HEK293 (cell line): ENCODE measurements at regions of chrX and their contacts with region 1.

Region 1: DNA sequence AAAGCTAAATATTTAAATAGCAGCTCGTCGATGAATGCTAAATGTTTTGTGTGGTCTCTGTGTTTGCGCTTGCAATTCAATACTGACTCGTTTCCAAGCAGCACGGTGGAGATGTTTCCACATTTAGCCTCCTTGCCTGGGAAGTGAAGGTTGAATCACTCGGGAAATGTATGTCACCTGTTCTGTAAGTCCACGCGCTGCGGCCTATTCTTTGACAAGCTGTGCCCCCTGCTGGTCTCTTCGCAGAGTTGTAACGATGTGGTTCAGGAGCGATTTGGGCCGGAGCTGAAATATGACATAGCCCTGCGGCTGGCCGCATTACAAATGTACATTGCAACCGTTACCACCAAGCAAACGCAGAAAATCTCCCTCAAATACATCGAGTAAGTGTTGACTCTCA is 89.6 kb upstream of the PRPS2 start:
- H3K4me3 ChIP-seq: no peak overlapping the region
- H3K27ac ChIP-seq: no peak overlapping the region
- H3K4me1 ChIP-seq: no peaks in the 10 kb centered on the region
- CTCF ChIP-seq: 0 out of 2 replicates have a peak, but pooled peaks have one; percentile 7

Region 2: GRCh38 chrX:12080265-12080664 is 621.4 kb before region 1 on chrX:
- CTCF ChIA-PET with region 1: interaction called, 17 read pairs
- POLR2A ChIA-PET with region 1: no interaction called
- H3K4me3 ChIP-seq: no peak overlapping the region
- H3K27ac ChIP-seq: peak overlapping the region; percentile 54; the same call in 1 of the 2 replicates
- H3K4me1 ChIP-seq: peaks cover 3% of the 10 kb centered on the region; the same call in 1 of the 2 replicates
- CTCF ChIP-seq: no peak

Region 3: GRCh38 chrX:12497832-12498591 is 203.6 kb before region 1 on chrX:
- CTCF ChIA-PET with region 1: interaction called, 10 read pairs
- POLR2A ChIA-PET with region 1: no interaction called
- H3K4me3 ChIP-seq: no peak overlapping the region
- H3K27ac ChIP-seq: no peak overlapping the region
- H3K4me1 ChIP-seq: no peaks in the 10 kb centered on the region
- CTCF ChIP-seq: 0 out of 2 replicates have a peak, but pooled peaks have one; percentile 13

Region 4: DNA sequence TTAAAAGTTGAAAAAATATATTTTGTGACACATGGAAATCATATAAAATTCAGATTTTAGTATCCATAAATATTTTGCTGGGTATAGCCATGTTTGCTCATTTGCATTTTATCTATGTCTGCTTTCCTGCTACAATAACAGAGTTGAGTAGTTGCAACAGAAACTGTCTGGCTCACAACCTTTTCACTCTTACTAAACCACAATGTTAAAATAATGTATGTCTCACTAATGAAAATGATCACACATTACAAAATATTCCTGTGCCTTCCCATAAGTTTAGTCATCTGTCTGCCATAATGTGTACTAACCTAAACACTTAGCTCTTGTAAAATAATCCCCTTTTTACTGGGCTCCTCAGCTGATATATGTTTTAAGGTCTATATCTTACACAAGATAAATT is 84.4 kb before region 1 on chrX:
- CTCF ChIA-PET with region 1: no interaction called
- POLR2A ChIA-PET with region 1: no interaction called
- H3K4me3 ChIP-seq: no peak overlapping the region
- H3K27ac ChIP-seq: no peak overlapping the region
- H3K4me1 ChIP-seq: peaks cover 3% of the 10 kb centered on the region; the same call in 1 of the 2 replicates
- CTCF ChIP-seq: no peak

Region 5: GRCh38 chrX:12686331-12686730 is 15.3 kb before region 1 on chrX:
- CTCF ChIA-PET with region 1: interaction called, 11 read pairs
- POLR2A ChIA-PET with region 1: no interaction called
- H3K4me3 ChIP-seq: no peak overlapping the region
- H3K27ac ChIP-seq: no peak overlapping the region
- H3K4me1 ChIP-seq: no peaks in the 10 kb centered on the region
- CTCF ChIP-seq: no peak